ENCODE measurements at regions of chr16 and their contacts with region 1.

Region 1: GRCh38 chr16:21194771-21195301 is 16.5 kb downstream of the ZP2 start:
- DNase-seq: no peak
- H3K4me3 ChIP-seq: no peak overlapping the region
- H3K4me3 Mint-ChIP-seq: no peak overlapping the region
- H3K27ac ChIP-seq: no peak overlapping the region
- H3K27ac Mint-ChIP-seq: peak overlapping the region in 1 of 7 donors; percentile 19
- H3K4me1 ChIP-seq: no peaks in the 10 kb centered on the region
- H3K4me1 Mint-ChIP-seq: peaks cover 7% of the 10 kb centered on the region
- H3K27me3 ChIP-seq: peaks cover 0 to 2% of the 10 kb centered on the region in 2 donors
- H3K27me3 Mint-ChIP-seq: peaks cover 1 to 23% (median 15%) of the 10 kb centered on the region in 3 donors
- CTCF ChIP-seq: no peak

Region 2: GRCh38 chr16:21208446-21209230 is 13.8 kb after region 1 on chr16:
- intact Hi-C with region 1: no loop called
- DNase-seq: no peak
- H3K4me3 ChIP-seq: no peak overlapping the region
- H3K4me3 Mint-ChIP-seq: no peak overlapping the region
- H3K27ac ChIP-seq: no peak overlapping the region
- H3K27ac Mint-ChIP-seq: no peak overlapping the region
- H3K4me1 ChIP-seq: no peaks in the 10 kb centered on the region
- H3K4me1 Mint-ChIP-seq: no peaks in the 10 kb centered on the region
- H3K27me3 ChIP-seq: peaks cover 3 to 5% of the 10 kb centered on the region in 2 donors
- H3K27me3 Mint-ChIP-seq: peaks cover 15 to 28% (median 19%) of the 10 kb centered on the region in 3 donors
- CTCF ChIP-seq: no peak

Region 3: DNA sequence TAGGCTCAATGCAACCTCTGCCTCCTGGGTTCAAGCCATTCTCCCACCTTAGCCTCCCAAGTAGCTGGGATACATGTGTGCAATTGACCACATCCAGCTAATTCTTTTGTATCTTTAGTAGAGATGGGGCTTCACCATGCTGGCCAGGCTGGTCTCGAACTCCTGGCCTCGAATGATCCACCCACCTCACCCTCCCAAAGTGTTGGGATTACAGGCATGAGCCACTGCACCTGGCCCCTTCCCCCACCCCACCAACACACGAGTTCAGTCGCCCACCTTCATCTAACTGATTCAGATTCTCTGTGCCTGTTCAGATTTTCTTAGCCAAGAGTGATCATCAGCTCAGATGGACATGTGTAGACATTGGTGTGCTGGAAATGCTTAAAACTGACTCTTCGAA is 379.5 kb after region 1 on chr16:
- intact Hi-C with region 1: loop called in 1 of 2 experiments (anchors 10 kb)
- DNase-seq: no peak
- H3K4me3 ChIP-seq: no peak overlapping the region
- H3K4me3 Mint-ChIP-seq: no peak overlapping the region
- H3K27ac ChIP-seq: no peak overlapping the region
- H3K27ac Mint-ChIP-seq: no peak overlapping the region
- H3K4me1 ChIP-seq: no peaks in the 10 kb centered on the region
- H3K4me1 Mint-ChIP-seq: no peaks in the 10 kb centered on the region
- H3K27me3 ChIP-seq: no peaks in the 10 kb centered on the region
- H3K27me3 Mint-ChIP-seq: peaks cover 11 to 13% (median 12%) of the 10 kb centered on the region in 3 donors
- CTCF ChIP-seq: no peak

Region 4: DNA sequence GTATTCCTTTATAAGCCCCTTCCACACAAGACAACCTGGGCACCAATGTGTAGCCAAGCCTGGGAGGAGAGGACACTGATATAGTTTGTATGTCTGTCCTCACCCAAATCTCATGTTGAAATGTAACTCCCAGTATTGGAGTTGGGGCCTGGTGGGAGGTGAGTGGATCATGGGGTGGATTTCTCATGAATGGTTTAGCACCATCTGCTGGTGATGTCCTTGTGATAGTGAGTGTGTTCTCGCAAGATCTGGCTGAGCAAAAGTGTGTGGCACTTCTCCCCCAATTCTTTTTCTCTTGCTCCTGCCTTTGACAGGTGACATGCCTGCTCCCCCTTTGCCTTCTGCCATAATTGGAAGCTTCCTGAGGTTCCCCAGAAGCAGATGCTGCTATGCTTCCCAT is 1818.6 kb after region 1 on chr16:
- intact Hi-C with region 1: no loop called
- DNase-seq: no peak
- H3K4me3 ChIP-seq: no peak overlapping the region
- H3K4me3 Mint-ChIP-seq: no peak overlapping the region
- H3K27ac ChIP-seq: no peak overlapping the region
- H3K27ac Mint-ChIP-seq: no peak overlapping the region
- H3K4me1 ChIP-seq: no peaks in the 10 kb centered on the region
- H3K4me1 Mint-ChIP-seq: peaks cover 4% of the 10 kb centered on the region
- H3K27me3 ChIP-seq: no peaks in the 10 kb centered on the region
- H3K27me3 Mint-ChIP-seq: peaks cover 1 to 9% (median 3%) of the 10 kb centered on the region in 3 donors
- CTCF ChIP-seq: no peak